Left ventricle myocardium superior (tissue), 1 donor: ENCODE measurements at regions of chr2 and their contacts with region 1.

Region 1: DNA sequence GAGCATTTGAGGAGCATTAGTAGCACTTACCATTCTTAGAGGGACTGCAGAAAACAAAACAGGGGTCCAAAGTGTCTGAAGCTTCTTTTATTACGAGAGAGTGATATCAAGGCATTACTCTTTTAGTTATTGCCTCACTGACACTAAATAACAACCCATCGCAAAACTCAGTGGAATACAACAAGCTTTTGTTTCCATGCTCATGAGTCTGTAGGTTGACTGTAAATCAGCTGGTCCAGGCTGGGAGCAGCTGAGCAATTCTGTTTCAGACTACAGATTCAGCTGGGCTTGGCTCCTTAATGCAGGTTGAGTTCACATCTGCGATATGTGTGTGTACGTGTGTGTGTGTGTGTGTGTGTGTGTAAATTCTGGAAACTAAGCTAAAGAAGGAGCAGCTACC is 501.8 kb upstream of the PKDCC start:
- DNase-seq: no peak
- ATAC-seq: no peak

Region 2: GRCh38 chr2:42386684-42387083 is 840.7 kb after region 1 on chr2:
- intact Hi-C with region 1: loop called (anchors 10 kb)
- DNase-seq: no peak
- ATAC-seq: no peak